Transverse colon (tissue), 4 donors: ENCODE measurements at regions of chr13 and their contacts with region 1.

Region 1: DNA sequence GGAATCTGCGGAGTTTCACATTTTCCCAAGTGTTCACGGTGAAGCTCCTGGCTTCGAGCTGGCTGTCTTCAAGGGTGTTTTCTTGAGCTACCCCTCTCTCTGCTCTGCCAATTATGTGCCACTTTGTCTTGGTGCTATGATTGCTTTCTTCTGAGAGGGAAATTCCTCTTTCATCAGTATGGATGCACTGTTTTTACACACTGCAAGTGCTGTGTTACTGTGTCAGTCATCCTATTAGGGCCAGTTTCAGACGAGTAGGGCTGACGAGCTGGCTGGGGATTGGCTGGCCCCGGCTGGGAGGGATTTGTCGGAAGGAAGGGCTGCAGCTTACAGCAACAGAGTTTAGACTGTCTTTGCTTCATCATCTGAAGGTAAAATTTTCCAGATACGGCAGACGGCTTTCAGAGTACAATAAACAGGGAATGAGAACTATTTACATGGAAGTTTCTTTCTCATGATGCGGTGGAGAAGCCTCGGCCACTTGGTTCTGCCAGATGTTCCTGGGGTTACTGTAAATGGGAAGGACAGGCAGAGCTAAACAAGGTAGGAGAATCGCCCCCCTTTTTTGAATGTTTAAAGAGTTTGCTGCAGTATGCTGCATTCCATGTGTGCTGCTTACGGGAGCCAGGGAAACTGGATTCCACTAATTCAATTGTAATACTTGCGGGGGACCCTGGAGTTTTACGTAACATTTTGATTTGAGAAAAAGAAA is at the start of gene MBNL2:
- DNase-seq: peak; percentile 94
- H3K4me3 ChIP-seq: peak within 1 kb of the TSS; percentile 33 to 79 (median 44)
- H3K27ac ChIP-seq: peak within 1 kb of the TSS; percentile 90 to 96 (median 90)
- H3K4me1 ChIP-seq: peaks cover 10 to 41% (median 37%) of the 10 kb centered on the region in 4 donors
- H3K27me3 ChIP-seq: no peaks in the 10 kb centered on the region
- CTCF ChIP-seq: no peak
- EP300 ChIP-seq: peak; percentile 75
- POLR2A ChIP-seq: peak; percentile 90
- total RNA-seq, gene MBNL2: 26.9 to 53.7 (median 46.1) TPM

Region 2: GRCh38 chr13:96880419-96880818 is 341.7 kb before region 1 on chr13:
- in situ Hi-C with region 1: no loop called
- intact Hi-C with region 1: no loop called
- DNase-seq: no peak
- H3K4me3 ChIP-seq: no peak overlapping the region
- H3K27ac ChIP-seq: no peak overlapping the region
- H3K4me1 ChIP-seq: no peaks in the 10 kb centered on the region
- H3K27me3 ChIP-seq: no peaks in the 10 kb centered on the region
- CTCF ChIP-seq: no peak
- EP300 ChIP-seq: no peak
- POLR2A ChIP-seq: no peak

Region 3: DNA sequence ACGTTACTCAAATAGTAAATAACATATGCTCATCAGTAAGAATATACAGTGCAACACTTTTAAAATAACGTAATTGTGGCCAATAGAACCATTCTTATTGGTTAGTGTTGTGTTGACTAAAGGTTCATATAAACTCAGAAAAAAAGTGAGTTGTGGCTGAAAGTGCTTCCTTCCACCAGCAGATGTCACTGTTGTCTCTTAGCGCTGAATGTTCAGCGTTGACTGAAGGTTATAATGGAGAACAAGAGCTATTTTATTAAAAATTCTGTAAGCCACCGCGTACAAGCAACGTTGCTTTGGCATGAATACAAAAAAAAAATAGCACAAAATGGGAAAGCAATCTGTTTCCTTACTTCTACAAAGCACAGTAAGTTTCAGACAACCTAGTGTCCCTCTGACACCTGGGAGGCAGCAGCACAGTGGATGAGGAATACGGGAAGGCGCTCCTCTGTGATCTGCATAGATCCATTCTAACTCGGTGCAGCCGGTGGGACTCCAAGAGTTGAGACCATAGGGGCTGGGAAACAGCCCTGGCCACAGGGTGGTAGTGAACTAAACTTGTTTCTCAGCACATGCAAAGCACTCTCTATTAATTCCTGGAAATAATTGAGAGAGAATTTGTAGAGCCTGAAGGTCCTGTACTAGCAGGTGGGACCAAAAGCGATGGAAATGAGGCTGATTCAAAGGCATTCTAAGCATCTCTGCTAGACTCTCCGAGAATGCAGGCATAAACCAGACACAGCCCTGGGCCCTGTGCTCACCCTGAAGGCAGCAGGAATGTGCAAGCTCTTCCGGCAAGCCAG is 203.9 kb before region 1 on chr13:
- in situ Hi-C with region 1: loop called in 1 of 4 experiments (anchors 25 kb)
- intact Hi-C with region 1: no loop called
- DNase-seq: peak; percentile 14
- H3K4me3 ChIP-seq: no peak overlapping the region
- H3K27ac ChIP-seq: no peak overlapping the region
- H3K4me1 ChIP-seq: no peaks in the 10 kb centered on the region
- H3K27me3 ChIP-seq: no peaks in the 10 kb centered on the region
- CTCF ChIP-seq: peak; percentile 59 to 91 (median 87)
- EP300 ChIP-seq: no peak
- POLR2A ChIP-seq: no peak

Region 4: DNA sequence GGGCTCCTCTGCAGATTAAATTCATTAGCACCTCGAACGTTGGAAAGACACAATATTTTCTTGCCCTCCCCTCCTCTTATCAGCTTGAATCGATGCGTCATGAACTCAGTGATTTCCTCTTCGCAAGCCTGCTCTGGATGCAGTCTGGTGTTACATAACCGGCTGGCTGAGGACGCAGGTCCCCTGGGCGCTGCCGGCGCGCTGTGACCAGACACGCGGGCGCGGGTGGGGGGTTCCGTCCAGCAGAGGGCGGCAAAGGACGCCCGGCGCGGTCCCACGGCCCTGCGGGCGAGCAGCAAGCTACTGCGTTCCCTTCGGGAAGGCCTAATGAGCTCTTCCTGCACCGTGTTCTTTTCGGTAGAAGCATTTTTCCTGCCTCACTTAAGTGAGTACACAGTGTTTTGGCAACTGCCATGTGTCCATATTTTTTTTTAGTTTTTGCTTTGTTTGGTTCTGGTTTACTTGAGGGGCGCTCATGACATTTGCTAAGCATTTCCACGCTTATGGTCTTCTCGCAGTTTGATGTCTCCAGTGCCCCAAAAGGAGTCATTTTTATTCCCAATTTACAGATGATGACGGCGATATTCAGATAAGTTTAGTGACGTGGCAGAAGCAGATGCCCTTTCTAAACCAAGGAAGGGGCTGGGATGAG is 112.2 kb before region 1 on chr13:
- in situ Hi-C with region 1: loop called in 1 of 4 experiments (anchors 25 kb)
- intact Hi-C with region 1: loop called (anchors 5 kb)
- DNase-seq: peak; percentile 92
- H3K4me3 ChIP-seq: peak overlapping the region in 1 of 4 donors; percentile 8
- H3K27ac ChIP-seq: peak overlapping the region; percentile 39 to 84 (median 80)
- H3K4me1 ChIP-seq: peaks cover 11 to 38% (median 26%) of the 10 kb centered on the region in 4 donors
- H3K27me3 ChIP-seq: no peaks in the 10 kb centered on the region
- CTCF ChIP-seq: peak; percentile 93 to 97 (median 96)
- EP300 ChIP-seq: no peak
- POLR2A ChIP-seq: no peak

Region 5: GRCh38 chr13:97116754-97117153 is 105.4 kb before region 1 on chr13:
- in situ Hi-C with region 1: loop called in 2 of 4 experiments (anchors 10 to 25 kb)
- intact Hi-C with region 1: loop called (anchors 5 kb)
- DNase-seq: no peak
- H3K4me3 ChIP-seq: no peak overlapping the region
- H3K27ac ChIP-seq: peak overlapping the region in 3 of 4 donors; percentile 78 to 84 (median 81)
- H3K4me1 ChIP-seq: peaks cover 18 to 45% (median 23%) of the 10 kb centered on the region in 4 donors
- H3K27me3 ChIP-seq: no peaks in the 10 kb centered on the region
- CTCF ChIP-seq: no peak
- EP300 ChIP-seq: peak; percentile 40
- POLR2A ChIP-seq: no peak

Region 6: DNA sequence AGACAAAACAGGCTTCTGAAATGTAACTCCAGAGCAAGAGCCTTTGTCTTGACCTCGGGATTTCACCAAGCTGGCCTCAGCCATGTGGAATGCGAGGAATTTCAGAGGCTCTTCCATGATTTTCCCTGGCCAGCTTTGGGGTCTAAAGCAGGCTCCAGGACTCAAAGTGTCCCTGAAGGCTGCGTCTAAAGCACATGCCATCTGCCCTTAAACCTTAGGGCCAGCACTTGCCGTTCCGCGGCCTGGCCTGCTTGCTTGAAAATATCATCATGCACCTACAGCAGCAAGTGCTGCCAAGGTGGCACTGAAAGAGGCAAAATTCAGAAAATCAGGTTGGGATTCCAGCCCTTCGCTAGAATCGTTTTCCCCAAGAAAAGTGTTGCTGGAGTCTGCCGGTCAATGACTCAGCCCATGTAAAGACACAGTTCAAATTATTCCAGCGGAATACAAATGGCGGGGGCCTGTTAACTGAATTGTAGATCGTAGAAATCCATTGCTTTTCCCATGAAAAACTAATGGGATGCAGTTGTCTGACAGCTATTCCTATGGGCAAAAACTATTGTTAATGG is 106.2 kb after region 1 on chr13:
- in situ Hi-C with region 1: no loop called
- intact Hi-C with region 1: no loop called
- DNase-seq: no peak
- H3K4me3 ChIP-seq: no peak overlapping the region
- H3K27ac ChIP-seq: peak overlapping the region; percentile 32 to 57 (median 48)
- H3K4me1 ChIP-seq: peaks cover 0 to 18% (median 2%) of the 10 kb centered on the region in 4 donors
- H3K27me3 ChIP-seq: no peaks in the 10 kb centered on the region
- CTCF ChIP-seq: no peak
- EP300 ChIP-seq: no peak
- POLR2A ChIP-seq: no peak

Region 7: DNA sequence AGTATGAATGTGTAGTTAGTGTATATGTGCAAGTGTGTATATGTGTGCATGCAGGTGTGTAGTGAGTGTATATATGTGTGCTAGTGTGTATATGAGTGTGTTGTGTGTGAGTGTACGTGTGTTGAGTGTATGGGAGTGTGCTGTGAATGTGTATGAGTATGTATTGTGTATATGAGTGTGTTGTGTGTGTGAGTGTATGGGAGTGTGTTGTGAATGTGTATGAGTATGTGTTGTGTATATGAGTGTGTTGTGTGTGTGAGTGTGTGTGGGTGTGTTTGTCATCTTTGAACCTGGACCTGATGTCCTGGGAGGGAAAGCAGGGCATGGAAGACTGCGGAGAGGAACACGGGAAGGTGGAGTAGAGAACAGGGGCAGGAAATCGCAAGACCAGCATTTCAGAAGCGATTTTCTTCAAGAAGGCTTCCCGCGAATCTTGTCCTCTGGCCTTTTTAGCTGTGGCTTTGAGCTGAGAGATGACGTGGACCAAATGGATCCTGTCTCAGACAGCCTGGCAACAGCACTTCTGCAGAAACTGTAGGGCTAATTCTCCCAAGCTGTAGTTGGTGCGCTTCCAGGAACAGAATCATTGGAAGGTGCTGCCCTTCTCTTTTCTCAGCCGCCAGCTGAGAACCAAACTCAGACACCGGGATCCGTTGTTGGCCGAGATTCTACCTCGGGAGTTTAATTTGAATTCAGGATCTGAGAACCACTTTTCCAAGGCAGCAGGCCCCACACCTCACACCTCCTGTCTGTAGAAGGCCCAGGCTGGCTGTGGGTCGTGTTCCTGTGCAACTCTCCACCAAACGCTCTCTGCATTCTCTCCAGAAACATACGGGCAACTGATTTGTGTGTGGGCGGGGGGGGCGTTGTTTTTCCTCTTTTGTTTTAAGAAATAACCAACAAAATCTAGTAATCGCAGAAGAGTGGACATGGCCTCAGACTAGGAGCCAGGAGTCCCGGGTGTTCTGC is 117.2 kb after region 1 on chr13:
- in situ Hi-C with region 1: loop called in 2 of 4 experiments (anchors 10 kb)
- intact Hi-C with region 1: loop called (anchors 5 kb)
- DNase-seq: peak; percentile 41
- H3K4me3 ChIP-seq: no peak overlapping the region
- H3K27ac ChIP-seq: peak overlapping the region; percentile 17 to 81 (median 65)
- H3K4me1 ChIP-seq: peaks cover 0 to 43% (median 27%) of the 10 kb centered on the region in 4 donors
- H3K27me3 ChIP-seq: no peaks in the 10 kb centered on the region
- CTCF ChIP-seq: no peak
- EP300 ChIP-seq: no peak
- POLR2A ChIP-seq: no peak

Region 8: GRCh38 chr13:97432917-97433726 is 211.0 kb after region 1 on chr13:
- in situ Hi-C with region 1: loop called in 1 of 4 experiments (anchors 10 kb)
- intact Hi-C with region 1: no loop called
- DNase-seq: peak; percentile 99
- H3K4me3 ChIP-seq: peak overlapping the region; percentile 46 to 83 (median 78)
- H3K27ac ChIP-seq: peak overlapping the region; percentile 99 to 100 (median 100)
- H3K4me1 ChIP-seq: peaks cover 7 to 46% (median 38%) of the 10 kb centered on the region in 4 donors
- H3K27me3 ChIP-seq: no peaks in the 10 kb centered on the region
- CTCF ChIP-seq: no peak
- EP300 ChIP-seq: no peak
- POLR2A ChIP-seq: no peak